T-cell (primary cell): ENCODE measurements at regions of chr3 and their contacts with region 1.

Region 1: GRCh38 chr3:141360888-141361598 is 7.3 kb upstream of the ZBTB38 start:
- DNase-seq: peak in 2 of 35 experiments; percentile 14 to 68
- ATAC-seq: peak; percentile 52 to 74 (median 67)
- H3K4me3 ChIP-seq: no peak overlapping the region
- H3K4me3 Mint-ChIP-seq: peak overlapping the region in 1 of 3 donors; percentile 22
- H3K27ac ChIP-seq: no peak overlapping the region
- H3K27ac Mint-ChIP-seq: peak overlapping the region in 1 of 2 donors; percentile 71
- H3K4me1 ChIP-seq: peaks cover 0 to 4% of the 10 kb centered on the region in 2 experiments
- H3K4me1 Mint-ChIP-seq: peaks cover 0 to 8% (median 6%) of the 10 kb centered on the region in 3 donors
- H3K27me3 ChIP-seq: no peaks in the 10 kb centered on the region
- H3K27me3 Mint-ChIP-seq: peaks cover 0 to 3% of the 10 kb centered on the region in 2 donors

Region 2: GRCh38 chr3:141379250-141379966 is 18.4 kb after region 1 on chr3:
- CTCF ChIA-PET with region 1: interaction called, 3 to 12 read pairs
- POLR2A ChIA-PET with region 1: no interaction called
- DNase-seq: peak in 12 of 35 experiments; percentile 2 to 60 (median 12)
- ATAC-seq: peak; percentile 63 to 82 (median 68)
- H3K4me3 ChIP-seq: no peak overlapping the region
- H3K4me3 Mint-ChIP-seq: peak overlapping the region; percentile 16 to 50 (median 36)
- H3K27ac ChIP-seq: peak overlapping the region; percentile 78
- H3K27ac Mint-ChIP-seq: peak overlapping the region; percentile 88 to 93
- H3K4me1 ChIP-seq: peaks cover 0 to 31% of the 10 kb centered on the region in 2 experiments
- H3K4me1 Mint-ChIP-seq: peaks cover 21 to 40% (median 39%) of the 10 kb centered on the region in 3 donors
- H3K27me3 ChIP-seq: no peaks in the 10 kb centered on the region
- H3K27me3 Mint-ChIP-seq: no peaks in the 10 kb centered on the region

Region 3: DNA sequence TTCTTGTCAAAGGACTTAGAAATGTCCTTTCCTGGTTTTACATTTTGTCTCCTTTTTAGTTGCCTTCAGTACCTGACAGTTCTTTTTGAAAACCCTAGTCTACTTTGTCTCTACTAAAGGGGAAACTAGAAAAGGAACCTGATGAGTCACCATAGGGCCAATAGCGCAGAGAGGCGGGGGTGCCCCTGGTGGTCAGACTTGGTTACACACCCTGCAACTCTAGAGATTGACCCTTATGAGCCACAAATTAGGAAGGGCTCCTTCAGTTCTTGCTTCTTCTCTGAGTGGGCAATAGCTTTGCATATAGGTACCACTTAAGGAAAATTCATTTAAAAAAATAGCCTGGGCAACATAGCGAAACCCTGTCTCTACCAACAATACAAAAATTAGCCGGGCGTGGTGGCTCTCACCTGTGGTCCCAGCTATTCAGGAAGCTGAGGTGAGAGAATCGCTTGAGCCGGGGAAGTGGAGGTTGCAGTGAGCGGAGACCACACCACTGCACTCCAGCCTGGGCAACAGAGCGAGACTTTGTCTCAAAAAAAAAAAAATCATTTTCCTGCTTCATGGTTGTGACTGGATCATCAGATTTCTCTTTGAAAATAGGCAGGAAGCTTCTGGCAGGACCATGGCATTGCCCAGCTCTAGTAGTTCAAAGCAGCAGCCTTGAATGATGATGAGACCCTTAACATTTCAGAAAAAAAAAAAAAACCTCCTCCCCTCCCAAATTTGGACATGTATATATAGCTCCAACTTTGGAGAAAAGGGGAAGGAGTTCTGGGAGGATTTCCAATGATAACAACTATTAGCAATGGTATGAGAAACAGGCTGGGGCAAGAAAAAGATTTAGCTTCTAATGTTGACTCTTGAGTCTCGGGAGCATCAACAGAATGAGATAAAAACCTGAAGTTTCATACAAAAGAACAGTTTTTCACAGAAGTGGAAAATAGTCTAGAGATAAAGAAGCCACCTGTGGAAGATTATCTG is 80.6 kb after region 1 on chr3:
- CTCF ChIA-PET with region 1: interaction called, 12 to 43 read pairs
- POLR2A ChIA-PET with region 1: no interaction called
- DNase-seq: peak; percentile 27 to 84 (median 65)
- ATAC-seq: peak; percentile 98 to 100 (median 99)
- H3K4me3 ChIP-seq: no peak overlapping the region
- H3K4me3 Mint-ChIP-seq: no peak overlapping the region
- H3K27ac ChIP-seq: peak overlapping the region; percentile 36
- H3K27ac Mint-ChIP-seq: peak overlapping the region; percentile 80 to 85
- H3K4me1 ChIP-seq: peaks cover 0 to 12% of the 10 kb centered on the region in 2 experiments
- H3K4me1 Mint-ChIP-seq: peaks cover 29 to 40% (median 33%) of the 10 kb centered on the region in 3 donors
- H3K27me3 ChIP-seq: no peaks in the 10 kb centered on the region
- H3K27me3 Mint-ChIP-seq: no peaks in the 10 kb centered on the region

Region 4: DNA sequence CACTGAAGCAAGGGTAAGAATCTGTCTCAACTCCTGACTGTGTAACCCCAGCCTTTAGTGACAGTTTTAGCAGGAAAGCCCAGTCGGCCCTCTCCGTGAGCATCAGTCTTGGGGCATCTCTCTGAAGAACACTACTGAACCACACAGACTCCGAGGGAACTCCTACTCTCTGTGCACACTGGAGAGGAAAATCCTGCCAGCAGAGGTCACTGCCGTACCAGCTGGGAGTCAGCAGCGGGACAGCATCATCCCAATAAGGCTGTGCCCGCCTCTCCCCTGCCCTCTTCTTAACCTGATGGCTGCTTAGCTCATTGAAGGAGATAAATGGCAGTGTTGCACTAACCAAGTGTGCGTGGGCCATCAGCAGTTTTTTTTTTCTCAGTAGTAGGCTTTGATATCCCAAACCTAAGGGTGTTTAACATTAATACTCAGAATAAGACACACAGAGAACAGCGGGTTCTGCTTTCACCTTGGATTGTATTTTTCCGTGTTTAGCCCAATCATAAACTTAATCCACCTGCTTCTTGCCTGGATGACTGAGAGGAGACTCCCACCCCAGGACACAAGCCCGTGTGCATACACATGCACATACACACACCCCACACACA is 99.2 kb after region 1 on chr3:
- CTCF ChIA-PET with region 1: interaction called, 23 to 27 read pairs
- POLR2A ChIA-PET with region 1: no interaction called
- DNase-seq: peak; percentile 71 to 92 (median 85)
- ATAC-seq: peak; percentile 98 to 100 (median 100)
- H3K4me3 ChIP-seq: no peak overlapping the region
- H3K4me3 Mint-ChIP-seq: no peak overlapping the region
- H3K27ac ChIP-seq: no peak overlapping the region
- H3K27ac Mint-ChIP-seq: no peak overlapping the region
- H3K4me1 ChIP-seq: peaks cover 0 to 7% of the 10 kb centered on the region in 2 experiments
- H3K4me1 Mint-ChIP-seq: peaks cover 4 to 11% (median 7%) of the 10 kb centered on the region in 3 donors
- H3K27me3 ChIP-seq: peaks cover 0 to 6% of the 10 kb centered on the region in 2 experiments
- H3K27me3 Mint-ChIP-seq: no peaks in the 10 kb centered on the region

Region 5: DNA sequence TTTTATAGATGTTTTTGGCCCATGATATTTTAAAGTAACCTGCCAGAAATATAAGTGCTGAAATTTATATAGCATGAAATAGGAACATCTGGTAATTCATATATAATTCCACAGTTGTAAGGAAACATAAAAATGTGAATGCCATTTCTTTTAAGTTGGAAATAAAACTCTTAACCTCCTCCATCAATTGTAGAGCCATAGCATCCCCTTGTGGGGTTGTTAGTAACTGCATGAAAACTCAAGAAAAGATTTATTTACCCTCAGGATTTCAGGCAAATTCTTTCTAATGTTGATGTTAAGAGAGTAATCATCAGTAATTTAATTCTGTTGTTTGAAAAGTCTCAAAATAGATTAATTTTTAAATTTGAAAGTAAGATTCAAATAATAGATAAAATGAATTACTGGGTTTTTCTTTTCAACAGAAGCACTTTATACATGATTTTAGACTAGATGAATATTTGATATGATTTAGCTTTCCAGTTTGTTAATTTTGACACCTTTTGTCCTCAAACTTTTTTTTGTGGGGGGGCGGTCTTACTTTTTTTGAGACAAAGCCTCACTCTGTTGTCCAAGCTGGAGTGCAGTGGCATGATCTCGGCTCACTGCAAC is 200.5 kb after region 1 on chr3:
- CTCF ChIA-PET with region 1: interaction called in 1 of 2 experiments, 10 read pairs
- POLR2A ChIA-PET with region 1: no interaction called
- DNase-seq: peak in 20 of 35 experiments; percentile 10 to 86 (median 42)
- ATAC-seq: peak; percentile 43 to 54 (median 51)
- H3K4me3 ChIP-seq: no peak overlapping the region
- H3K4me3 Mint-ChIP-seq: no peak overlapping the region
- H3K27ac ChIP-seq: peak overlapping the region; percentile 1
- H3K27ac Mint-ChIP-seq: peak overlapping the region; percentile 41 to 82
- H3K4me1 ChIP-seq: peaks cover 0 to 37% of the 10 kb centered on the region in 2 experiments
- H3K4me1 Mint-ChIP-seq: peaks cover 31 to 34% (median 32%) of the 10 kb centered on the region in 3 donors
- H3K27me3 ChIP-seq: no peaks in the 10 kb centered on the region
- H3K27me3 Mint-ChIP-seq: no peaks in the 10 kb centered on the region